ENCODE measurements at regions of chr2 and their contacts with region 1.

Region 1: DNA sequence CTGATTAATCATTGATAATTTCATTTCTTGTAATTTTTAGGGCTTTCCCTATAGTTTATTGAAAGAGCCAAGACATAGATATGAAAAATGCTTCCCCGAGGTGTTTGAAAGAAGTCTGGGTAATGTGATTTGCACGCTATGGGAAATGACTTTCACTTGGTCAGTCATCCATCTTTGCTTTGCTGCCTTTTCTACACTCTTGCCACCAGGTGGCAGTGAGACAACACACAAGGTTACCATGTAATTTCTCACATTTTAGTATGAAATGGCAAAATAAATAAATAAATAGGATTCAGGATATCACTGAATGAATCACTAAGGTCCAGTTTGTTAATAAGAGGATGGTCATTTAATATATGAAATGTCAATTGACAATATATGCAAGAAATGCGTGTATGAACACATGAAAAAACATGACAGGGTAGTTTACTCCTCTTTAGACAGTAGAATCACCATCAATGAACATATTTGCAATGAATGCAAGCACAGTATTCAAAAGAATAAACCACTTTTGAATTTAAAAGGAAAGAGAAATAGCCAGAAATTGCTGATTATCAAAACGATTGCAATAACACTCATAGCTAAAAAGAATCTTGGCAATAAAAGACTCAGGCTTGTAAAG is 52.2 kb upstream of the KCNH7 start:
- DNase-seq: no peak
- H3K4me3 ChIP-seq: no peak overlapping the region
- H3K27ac ChIP-seq: no peak overlapping the region
- H3K4me1 ChIP-seq: no peaks in the 10 kb centered on the region
- H3K27me3 ChIP-seq: no peaks in the 10 kb centered on the region
- CTCF ChIP-seq: peak in 1 of 4 experiments; percentile 28
- EP300 ChIP-seq: no peak
- POLR2A ChIP-seq: no peak

Region 2: DNA sequence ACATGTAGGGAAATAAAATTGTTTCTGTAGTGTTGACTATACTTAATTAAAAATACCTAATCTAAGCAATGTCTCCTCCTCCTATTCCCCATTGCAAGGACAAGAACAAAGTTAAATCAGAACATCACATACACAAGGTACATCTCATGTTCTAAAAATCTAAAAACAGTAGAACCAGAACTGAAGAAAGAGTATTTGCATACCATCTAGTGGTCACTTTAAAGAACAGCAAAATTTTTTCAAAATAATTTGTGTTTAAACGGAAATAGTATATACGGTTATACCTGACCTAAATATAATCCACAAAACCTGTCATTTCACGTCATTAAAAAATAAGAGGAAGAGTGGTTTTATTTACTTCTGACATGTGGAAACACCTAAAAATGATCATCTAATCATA is 242.0 kb after region 1 on chr2:
- intact Hi-C with region 1: loop called (anchors 5 kb)
- DNase-seq: no peak
- H3K4me3 ChIP-seq: no peak overlapping the region
- H3K27ac ChIP-seq: no peak overlapping the region
- H3K4me1 ChIP-seq: no peaks in the 10 kb centered on the region
- H3K27me3 ChIP-seq: no peaks in the 10 kb centered on the region
- CTCF ChIP-seq: no peak
- EP300 ChIP-seq: no peak
- POLR2A ChIP-seq: no peak